ENCODE measurements at regions of chr1 and their contacts with region 1.

Region 1: DNA sequence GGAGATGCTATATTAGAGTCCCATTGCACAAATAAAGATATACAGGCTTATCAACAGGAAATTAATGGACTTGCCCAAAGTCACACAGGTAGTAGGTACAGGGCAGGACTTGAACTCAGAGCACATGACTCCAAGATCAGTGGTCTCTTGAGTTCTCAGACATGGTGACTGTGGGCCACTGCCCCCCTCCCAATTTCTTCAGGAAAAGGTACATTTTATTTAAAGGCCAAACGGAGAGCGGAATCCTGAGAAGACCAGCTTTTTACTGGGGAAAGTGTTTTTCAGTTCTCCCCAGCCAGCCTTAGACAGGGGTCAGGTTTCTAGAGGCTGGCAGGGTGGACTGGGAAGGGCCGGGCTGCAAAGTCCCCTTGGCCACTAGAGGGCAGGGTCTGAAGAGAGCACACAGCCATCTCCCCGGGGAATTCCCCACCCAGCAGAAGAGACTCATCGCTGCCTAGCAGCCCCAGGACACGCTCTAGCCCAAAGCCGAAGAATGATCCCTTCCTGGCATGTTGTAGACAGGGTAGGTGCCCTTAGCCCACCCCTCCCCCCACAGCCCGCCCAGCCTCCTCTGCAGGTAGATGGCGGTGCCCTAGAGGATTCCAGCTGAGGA is 29.7 kb downstream of the ACP6 start:
- DNase-seq: peak; percentile 91
- ATAC-seq: peak; percentile 99
- H3K4me3 Mint-ChIP-seq: no peak overlapping the region
- H3K27ac Mint-ChIP-seq: no peak overlapping the region
- H3K4me1 Mint-ChIP-seq: peaks cover 24% of the 10 kb centered on the region
- H3K27me3 Mint-ChIP-seq: no peaks in the 10 kb centered on the region

Region 2: GRCh38 chr1:147494998-147495580 is 145.6 kb before region 1 on chr1:
- CTCF ChIA-PET with region 1: interaction called, 8 read pairs
- POLR2A ChIA-PET with region 1: no interaction called
- intact Hi-C with region 1: loop called (anchors 1 kb)
- DNase-seq: peak; percentile 85
- ATAC-seq: peak; percentile 100
- H3K4me3 Mint-ChIP-seq: no peak overlapping the region
- H3K27ac Mint-ChIP-seq: no peak overlapping the region
- H3K4me1 Mint-ChIP-seq: peaks cover 3% of the 10 kb centered on the region
- H3K27me3 Mint-ChIP-seq: peaks cover 2% of the 10 kb centered on the region

Region 3: DNA sequence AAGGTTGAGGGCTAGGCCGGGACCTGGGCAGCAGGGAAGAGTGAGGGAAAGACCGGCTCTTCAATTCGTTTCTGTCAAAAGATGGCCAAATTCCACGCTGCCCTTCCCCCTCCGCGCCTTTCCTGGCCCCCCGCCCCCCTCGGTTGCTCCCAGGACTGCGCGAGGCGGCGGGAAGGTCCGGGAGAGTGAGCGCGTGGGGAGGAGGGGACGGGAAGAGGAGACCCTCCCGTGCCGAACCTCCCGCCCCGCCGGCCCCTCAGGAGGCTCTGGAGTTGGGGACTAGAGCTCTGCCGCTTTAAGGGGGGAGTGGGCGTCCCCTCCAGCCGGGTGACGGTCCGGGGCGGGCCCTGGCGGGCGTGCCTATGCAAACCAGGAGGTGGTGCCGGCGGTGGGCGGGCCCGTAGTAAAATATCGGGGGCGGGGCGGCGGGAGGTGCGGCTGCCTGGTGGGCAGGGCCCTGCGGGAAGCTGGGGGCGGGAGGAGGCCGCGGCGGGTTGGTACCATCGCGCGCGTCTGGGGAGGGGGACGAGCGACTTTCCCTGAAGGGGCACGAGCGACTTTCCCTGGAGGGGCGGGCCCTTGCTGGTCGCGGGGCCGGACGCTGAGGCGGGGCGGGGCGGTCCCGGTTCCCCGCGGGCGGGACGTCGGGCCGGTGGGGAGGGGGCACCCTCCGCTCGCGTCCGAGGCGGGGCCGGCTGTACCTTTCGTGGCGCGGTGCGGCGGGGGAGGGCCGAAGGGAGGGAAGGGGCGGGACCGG is 41.1 kb before region 1 on chr1:
- CTCF ChIA-PET with region 1: interaction called, 4 read pairs
- POLR2A ChIA-PET with region 1: no interaction called
- intact Hi-C with region 1: loop called in 1 of 2 experiments (anchors 1 kb)
- DNase-seq: peak; percentile 99
- ATAC-seq: peak; percentile 81
- H3K4me3 Mint-ChIP-seq: peak overlapping the region; percentile 89
- H3K27ac Mint-ChIP-seq: peak overlapping the region; percentile 89
- H3K4me1 Mint-ChIP-seq: peaks cover 34% of the 10 kb centered on the region
- H3K27me3 Mint-ChIP-seq: no peaks in the 10 kb centered on the region

Region 4: GRCh38 chr1:147670317-147671041 is 29.8 kb after region 1 on chr1 and contains the start of gene ACP6:
- CTCF ChIA-PET with region 1: interaction called, 7 read pairs
- POLR2A ChIA-PET with region 1: no interaction called
- intact Hi-C with region 1: loop called in 1 of 2 experiments (anchors 2 kb)
- DNase-seq: peak; percentile 94
- ATAC-seq: peak; percentile 97
- H3K4me3 Mint-ChIP-seq: peak within 1 kb of the TSS; percentile 86
- H3K27ac Mint-ChIP-seq: peak within 1 kb of the TSS; percentile 88
- H3K4me1 Mint-ChIP-seq: peaks cover 17% of the 10 kb centered on the region
- H3K27me3 Mint-ChIP-seq: peaks cover 6% of the 10 kb centered on the region
- total RNA-seq, gene ACP6: 11.1 to 11.7 TPM

Region 5: DNA sequence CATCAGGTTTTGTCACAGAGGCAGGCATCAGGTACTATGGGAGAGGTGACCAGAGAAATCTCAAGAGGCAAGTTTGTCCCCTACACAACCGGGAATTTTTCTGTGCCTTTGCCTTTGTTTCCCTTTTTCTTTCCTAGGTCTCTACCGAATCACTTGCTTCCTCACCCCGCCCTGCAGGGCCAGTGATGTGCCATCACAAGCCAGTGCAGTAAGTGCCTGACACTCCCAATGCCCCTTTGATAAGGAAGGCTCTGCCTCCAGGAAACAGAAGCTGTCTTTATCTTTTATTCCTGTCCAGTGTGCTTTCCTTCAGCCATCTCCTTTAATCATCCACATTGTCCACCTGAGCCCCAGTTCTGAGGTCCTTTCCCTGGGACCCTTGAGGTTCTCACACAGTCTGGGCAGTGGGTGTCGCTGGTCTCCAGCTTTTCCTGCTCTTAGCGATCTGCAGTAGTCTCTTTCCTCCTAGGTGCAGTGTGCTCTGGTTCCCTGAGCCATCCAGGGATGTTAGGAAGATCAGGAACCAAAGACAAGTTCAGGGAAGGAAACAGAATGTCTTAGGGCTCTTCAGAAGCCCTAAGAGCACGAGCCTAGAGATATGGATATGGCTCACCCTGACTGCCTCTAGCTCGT is 83.1 kb after region 1 on chr1:
- CTCF ChIA-PET with region 1: no interaction called
- POLR2A ChIA-PET with region 1: no interaction called
- intact Hi-C with region 1: no loop called
- DNase-seq: peak; percentile 41
- ATAC-seq: no peak
- H3K4me3 Mint-ChIP-seq: no peak overlapping the region
- H3K27ac Mint-ChIP-seq: no peak overlapping the region
- H3K4me1 Mint-ChIP-seq: no peaks in the 10 kb centered on the region
- H3K27me3 Mint-ChIP-seq: peaks cover 9% of the 10 kb centered on the region

Region 6: DNA sequence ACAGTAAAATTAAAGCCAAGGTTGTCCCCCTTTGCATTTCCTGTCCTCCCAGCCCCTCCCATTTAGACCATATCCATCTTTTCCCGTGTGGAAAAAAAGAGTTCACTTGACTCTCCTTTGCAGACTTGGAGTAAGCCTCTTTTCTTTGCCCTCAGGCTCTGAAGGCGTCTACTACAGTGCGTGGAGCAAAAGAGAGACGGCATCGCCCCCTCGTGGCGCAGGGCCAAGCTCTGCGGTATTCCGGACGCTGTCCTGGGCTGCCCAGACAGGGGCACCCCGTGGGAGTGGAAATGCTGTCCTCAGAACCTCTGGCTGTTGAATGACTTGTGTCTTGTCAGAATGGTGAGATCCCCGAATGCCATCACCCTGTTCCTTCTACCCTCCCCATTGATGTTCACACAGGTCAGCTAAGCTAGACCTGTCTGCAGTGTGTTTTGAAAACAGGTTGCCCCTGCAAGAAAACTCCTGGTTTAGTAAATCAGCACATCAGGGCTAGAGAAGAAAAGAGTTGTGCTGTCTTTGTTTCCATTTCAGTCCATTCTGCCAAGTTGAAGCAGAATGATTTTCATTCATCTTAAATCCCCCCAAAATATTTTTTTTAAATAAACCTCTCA is 249.6 kb after region 1 on chr1:
- CTCF ChIA-PET with region 1: interaction called, 5 read pairs
- POLR2A ChIA-PET with region 1: no interaction called
- intact Hi-C with region 1: loop called (anchors 1 to 2 kb)
- DNase-seq: peak; percentile 85
- ATAC-seq: peak; percentile 91
- H3K4me3 Mint-ChIP-seq: no peak overlapping the region
- H3K27ac Mint-ChIP-seq: no peak overlapping the region
- H3K4me1 Mint-ChIP-seq: peaks cover 2% of the 10 kb centered on the region
- H3K27me3 Mint-ChIP-seq: no peaks in the 10 kb centered on the region